Activated CD4-positive, alpha-beta T cell treated with anti-CD3 and anti-CD28 coated beads for 36 hours (primary cell): ENCODE measurements at regions of chr7 and their contacts with region 1.

Region 1: DNA sequence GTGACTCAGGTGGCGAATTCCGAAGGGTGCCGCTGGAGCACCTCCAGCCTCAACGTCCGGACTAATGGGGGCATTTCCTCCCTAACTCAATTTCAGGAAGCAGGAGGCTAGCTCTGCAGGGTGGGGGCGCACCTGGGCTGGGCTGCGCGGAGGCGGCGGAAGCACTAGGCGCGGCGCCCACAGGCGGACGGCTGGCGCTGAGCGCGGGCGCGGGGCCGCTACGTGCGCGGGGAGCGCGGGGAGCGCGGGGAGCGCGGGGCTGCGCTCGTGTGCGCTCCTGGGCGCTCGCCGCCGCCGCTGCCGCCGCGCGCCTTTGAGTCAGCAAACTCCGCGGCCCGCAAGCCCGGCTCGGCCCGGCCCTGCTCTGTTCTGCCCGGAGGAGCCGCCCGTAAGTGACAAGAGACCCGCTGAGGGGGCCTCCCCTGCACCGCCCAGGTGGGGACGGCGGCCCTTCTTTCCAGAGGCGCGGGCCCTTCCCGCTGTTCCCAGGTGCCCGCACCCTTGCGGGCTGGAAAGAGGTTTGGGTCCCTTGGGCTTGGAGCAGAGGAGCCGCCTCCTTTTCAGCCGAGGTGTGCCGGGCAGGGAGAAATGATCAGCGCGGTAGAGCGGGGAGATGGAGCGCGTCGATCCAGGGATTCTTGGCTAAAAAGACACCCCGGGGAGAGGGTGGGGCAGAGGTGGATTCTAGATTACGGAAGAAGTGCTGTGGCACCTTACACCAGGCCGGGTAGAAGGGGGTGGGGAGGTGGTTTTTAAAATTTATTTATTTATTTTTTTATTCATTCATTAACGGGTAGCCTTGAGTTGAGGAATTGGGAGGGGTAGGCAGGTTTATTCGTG is at the start of gene SNX10:
- DNase-seq: peak; percentile 81
- ATAC-seq: peak; percentile 68
- H3K4me3 Mint-ChIP-seq: peak within 1 kb of the TSS; percentile 85
- H3K27ac Mint-ChIP-seq: peak within 1 kb of the TSS; percentile 84
- H3K4me1 Mint-ChIP-seq: peaks cover 33% of the 10 kb centered on the region
- H3K27me3 Mint-ChIP-seq: no peaks in the 10 kb centered on the region
- total RNA-seq, gene SNX10: 28.1 to 35.5 TPM

Region 2: DNA sequence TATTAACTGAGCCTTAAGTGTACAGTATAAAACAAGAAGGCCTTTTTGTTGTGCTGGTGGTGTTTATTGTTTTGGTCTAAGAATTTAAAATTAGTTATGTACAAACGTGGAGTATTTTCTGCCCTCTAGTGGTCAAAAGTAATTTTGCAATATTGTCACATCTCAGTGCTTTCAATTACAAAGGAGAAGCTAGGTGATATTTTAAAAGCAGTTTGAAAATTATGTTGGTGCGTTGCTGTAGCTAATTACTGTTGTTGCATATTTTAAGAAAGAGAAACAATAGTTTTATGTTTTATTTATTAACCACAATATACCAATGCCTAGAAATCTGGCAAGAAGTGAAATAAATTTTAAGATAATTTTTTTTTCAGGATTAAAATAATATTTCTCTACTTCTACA is 1075.1 kb before region 1 on chr7:
- CTCF ChIA-PET with region 1: no interaction called
- POLR2A ChIA-PET with region 1: no interaction called
- intact Hi-C with region 1: no loop called
- DNase-seq: no peak
- ATAC-seq: no peak
- H3K4me3 Mint-ChIP-seq: no peak overlapping the region
- H3K27ac Mint-ChIP-seq: no peak overlapping the region
- H3K4me1 Mint-ChIP-seq: no peaks in the 10 kb centered on the region
- H3K27me3 Mint-ChIP-seq: peaks cover 13% of the 10 kb centered on the region

Region 3: GRCh38 chr7:25951031-25951948 is 340.6 kb before region 1 on chr7:
- CTCF ChIA-PET with region 1: no interaction called
- POLR2A ChIA-PET with region 1: no interaction called
- intact Hi-C with region 1: loop called in 1 of 2 experiments (anchors 5 kb)
- DNase-seq: peak; percentile 94
- ATAC-seq: peak; percentile 99
- H3K4me3 Mint-ChIP-seq: peak overlapping the region; percentile 80
- H3K27ac Mint-ChIP-seq: peak overlapping the region; percentile 72
- H3K4me1 Mint-ChIP-seq: peaks cover 17% of the 10 kb centered on the region
- H3K27me3 Mint-ChIP-seq: no peaks in the 10 kb centered on the region

Region 4: GRCh38 chr7:26101361-26102151 is 190.4 kb before region 1 on chr7:
- CTCF ChIA-PET with region 1: no interaction called
- POLR2A ChIA-PET with region 1: no interaction called
- intact Hi-C with region 1: loop called in 1 of 2 experiments (anchors 2 kb)
- DNase-seq: peak; percentile 31
- ATAC-seq: peak; percentile 4
- H3K4me3 Mint-ChIP-seq: peak overlapping the region; percentile 64
- H3K27ac Mint-ChIP-seq: peak overlapping the region; percentile 88
- H3K4me1 Mint-ChIP-seq: peaks cover 47% of the 10 kb centered on the region
- H3K27me3 Mint-ChIP-seq: no peaks in the 10 kb centered on the region

Region 5: GRCh38 chr7:26216049-26216448 is 75.9 kb before region 1 on chr7:
- CTCF ChIA-PET with region 1: no interaction called
- POLR2A ChIA-PET with region 1: no interaction called
- intact Hi-C with region 1: no loop called
- DNase-seq: no peak
- ATAC-seq: peak; percentile 77
- H3K4me3 Mint-ChIP-seq: no peak overlapping the region
- H3K27ac Mint-ChIP-seq: no peak overlapping the region
- H3K4me1 Mint-ChIP-seq: peaks cover 13% of the 10 kb centered on the region
- H3K27me3 Mint-ChIP-seq: no peaks in the 10 kb centered on the region

Region 6: GRCh38 chr7:26278770-26279169 is 13.1 kb before region 1 on chr7:
- CTCF ChIA-PET with region 1: interaction called, 3 read pairs
- POLR2A ChIA-PET with region 1: interaction called, 4 read pairs
- intact Hi-C with region 1: loop called (anchors 1 kb)
- DNase-seq: no peak
- ATAC-seq: peak; percentile 25
- H3K4me3 Mint-ChIP-seq: no peak overlapping the region
- H3K27ac Mint-ChIP-seq: no peak overlapping the region
- H3K4me1 Mint-ChIP-seq: peaks cover 19% of the 10 kb centered on the region
- H3K27me3 Mint-ChIP-seq: no peaks in the 10 kb centered on the region